GM12878 (cell line): ENCODE measurements at regions of chr2 and their contacts with region 1.

Region 1: DNA sequence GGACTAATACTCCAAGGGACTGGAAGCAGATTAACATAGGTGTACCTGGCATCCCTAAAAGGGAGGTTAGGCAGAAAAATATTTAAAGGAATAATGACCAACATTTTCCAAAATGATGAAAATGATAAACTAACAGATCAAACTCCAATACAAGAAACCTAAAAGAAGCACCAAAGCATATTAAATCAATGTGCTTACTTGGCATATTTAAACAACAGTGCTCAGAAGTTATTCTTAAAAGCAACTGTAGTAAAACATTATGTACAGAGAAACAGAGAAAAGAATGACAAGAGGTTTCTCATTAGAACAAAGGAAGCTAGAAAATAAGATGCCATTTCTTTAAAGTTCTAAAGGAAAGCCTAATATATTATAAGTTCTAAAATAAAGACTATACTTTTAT is 947.3 kb upstream of the TMEFF2 start:
- DNase-seq: no peak
- ATAC-seq: no peak
- H3K4me3 ChIP-seq: no peak overlapping the region
- H3K27ac ChIP-seq: no peak overlapping the region
- H3K4me1 ChIP-seq: no peaks in the 10 kb centered on the region
- H3K27me3 ChIP-seq: no peaks in the 10 kb centered on the region
- CTCF ChIP-seq: no peak
- EP300 ChIP-seq: no peak
- POLR2A ChIP-seq: no peak
- RAD21 ChIP-seq: no peak

Region 2: GRCh38 chr2:193687195-193687594 is 545.2 kb after region 1 on chr2:
- CTCF ChIA-PET with region 1: no interaction called
- POLR2A ChIA-PET with region 1: no interaction called
- RAD21 ChIA-PET with region 1: no interaction called
- SMC1A ChIA-PET with region 1: no interaction called
- in situ Hi-C with region 1: no loop called
- intact Hi-C with region 1: loop called (anchors 5 kb)
- DNase-seq: no peak
- ATAC-seq: peak; percentile 65
- H3K4me3 ChIP-seq: no peak overlapping the region
- H3K27ac ChIP-seq: no peak overlapping the region
- H3K4me1 ChIP-seq: no peaks in the 10 kb centered on the region
- H3K27me3 ChIP-seq: no peaks in the 10 kb centered on the region
- CTCF ChIP-seq: no peak
- EP300 ChIP-seq: no peak
- POLR2A ChIP-seq: no peak
- RAD21 ChIP-seq: no peak